Endothelial cell of umbilical vein (primary cell): ENCODE measurements at regions of chr19 and their contacts with region 1.

Region 1: DNA sequence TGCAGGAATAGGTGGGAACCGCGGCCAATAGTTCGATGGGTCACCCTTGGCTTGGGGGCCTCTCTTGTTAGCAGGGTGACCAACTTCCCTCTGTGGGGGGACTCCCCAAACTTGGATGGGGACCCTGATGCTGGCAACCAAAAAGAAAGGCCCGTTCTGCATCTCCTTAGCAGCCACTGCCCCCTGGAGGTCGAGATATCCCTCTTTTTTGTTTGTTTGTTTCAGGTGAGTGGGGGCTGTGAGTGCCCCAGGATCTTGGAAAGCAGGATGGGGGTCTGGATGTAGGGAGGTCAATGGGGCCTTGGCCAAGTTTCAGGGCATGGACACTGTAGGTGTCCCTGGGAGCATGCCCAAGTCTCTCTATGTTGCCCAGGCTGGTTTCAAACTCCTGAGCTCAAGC is 7.7 kb upstream of the CRTC1 start:
- DNase-seq: no peak
- H3K4me3 ChIP-seq: no peak overlapping the region
- H3K27ac ChIP-seq: no peak overlapping the region
- H3K4me1 ChIP-seq: peaks cover 17% of the 10 kb centered on the region
- H3K27me3 ChIP-seq: no peaks in the 10 kb centered on the region
- CTCF ChIP-seq: peak; percentile 33 to 38
- POLR2A ChIP-seq: no peak

Region 2: DNA sequence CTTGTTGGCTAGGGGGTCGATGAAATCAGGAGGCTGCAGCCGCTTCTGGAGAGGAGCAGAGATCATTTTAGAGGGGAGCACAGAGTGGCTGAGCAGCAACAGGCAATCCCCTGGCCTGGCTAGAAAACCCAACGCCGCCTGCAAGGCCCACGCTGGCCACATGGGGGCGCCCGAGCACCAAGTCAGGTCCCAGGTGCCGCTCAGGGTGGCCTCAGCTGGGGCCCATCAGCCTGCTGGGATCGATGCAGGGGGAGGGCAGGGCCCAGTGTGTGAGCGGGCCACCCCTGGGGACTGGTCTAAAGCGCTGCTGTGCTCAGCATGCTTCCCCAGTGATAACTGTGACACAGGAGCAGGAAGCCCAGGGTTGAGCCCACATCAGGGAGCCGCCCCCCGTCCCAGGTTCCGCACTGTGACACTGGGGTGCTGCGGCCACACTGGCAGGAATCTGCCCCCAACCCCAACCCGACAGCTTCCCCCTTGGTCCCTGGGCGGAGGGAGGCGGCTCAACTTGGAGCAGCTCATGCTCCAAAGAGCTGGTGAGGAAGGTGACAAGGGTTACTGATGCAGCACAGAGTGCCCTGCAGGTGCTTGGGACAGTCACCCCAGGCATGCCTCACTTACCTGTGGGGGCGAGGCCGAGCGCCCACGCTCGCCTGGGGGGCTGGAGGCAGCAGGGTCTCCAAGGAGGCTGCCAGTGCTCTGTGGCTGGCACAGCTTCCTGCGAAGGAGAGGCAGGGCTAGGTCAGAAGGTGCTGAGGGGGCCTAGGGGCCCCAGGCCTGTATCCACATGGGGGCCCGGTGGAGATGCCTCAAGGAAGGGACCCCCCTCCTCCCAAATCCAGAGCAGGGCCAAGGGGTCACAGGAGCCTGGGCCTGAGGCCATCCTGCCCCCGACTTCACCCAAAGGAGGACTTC is 224.6 kb before region 1 on chr19:
- CTCF ChIA-PET with region 1: interaction called, 3 read pairs
- POLR2A ChIA-PET with region 1: no interaction called
- dilution Hi-C with region 1: no loop called
- intact Hi-C with region 1: loop called (anchors 5 kb)
- DNase-seq: peak; percentile 65
- H3K4me3 ChIP-seq: no peak overlapping the region
- H3K27ac ChIP-seq: no peak overlapping the region
- H3K4me1 ChIP-seq: no peaks in the 10 kb centered on the region
- H3K27me3 ChIP-seq: no peaks in the 10 kb centered on the region
- CTCF ChIP-seq: peak; percentile 97 to 99
- POLR2A ChIP-seq: no peak

Region 3: GRCh38 chr19:18594096-18594823 is 81.5 kb before region 1 on chr19:
- CTCF ChIA-PET with region 1: interaction called, 21 read pairs
- POLR2A ChIA-PET with region 1: no interaction called
- dilution Hi-C with region 1: no loop called
- intact Hi-C with region 1: loop called (anchors 1 kb)
- DNase-seq: peak; percentile 80
- H3K4me3 ChIP-seq: peak overlapping the region in 2 of 3 experiments; percentile 14 to 25
- H3K27ac ChIP-seq: no peak overlapping the region
- H3K4me1 ChIP-seq: peaks cover 12% of the 10 kb centered on the region
- H3K27me3 ChIP-seq: no peaks in the 10 kb centered on the region
- CTCF ChIP-seq: peak; percentile 71 to 90
- POLR2A ChIP-seq: no peak

Region 4: DNA sequence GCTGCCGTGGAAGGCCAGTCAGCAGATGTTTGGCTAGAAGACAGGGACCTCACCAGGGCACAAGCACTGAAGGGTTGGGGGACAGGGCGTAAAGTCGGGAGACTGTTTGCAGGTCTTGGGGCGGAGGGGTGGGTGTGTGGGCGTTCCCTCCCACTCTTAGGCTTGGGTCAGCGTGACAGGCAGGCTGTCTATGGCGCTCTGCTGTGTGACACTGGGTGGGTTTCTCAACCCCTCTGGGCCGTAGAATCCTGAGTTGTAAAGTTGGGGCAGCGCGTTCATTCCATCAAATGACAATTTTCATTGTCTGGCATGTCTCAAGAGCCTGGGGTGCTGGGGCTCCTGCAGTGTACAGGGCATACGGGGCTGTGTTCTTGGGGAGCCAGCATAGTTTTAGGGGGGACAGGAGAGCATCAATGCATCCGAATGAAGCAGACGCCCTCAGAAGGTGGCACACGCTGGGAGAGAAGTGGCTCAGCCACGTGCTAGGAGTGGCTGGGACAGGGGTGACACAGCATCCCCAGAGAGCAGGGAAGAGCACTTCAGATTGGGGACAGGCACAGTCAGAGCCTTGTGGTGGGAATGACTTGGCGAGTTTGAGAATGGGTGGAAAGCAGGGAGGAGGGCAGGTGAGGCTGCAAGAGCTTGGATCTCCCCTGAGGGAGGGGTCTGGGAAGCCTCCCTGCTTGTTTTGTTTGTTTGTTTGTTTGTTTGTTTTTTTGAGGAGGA is 12.1 kb after region 1 on chr19:
- CTCF ChIA-PET with region 1: no interaction called
- POLR2A ChIA-PET with region 1: no interaction called
- dilution Hi-C with region 1: no loop called
- intact Hi-C with region 1: no loop called
- DNase-seq: no peak
- H3K4me3 ChIP-seq: no peak overlapping the region
- H3K27ac ChIP-seq: no peak overlapping the region
- H3K4me1 ChIP-seq: peaks cover 7% of the 10 kb centered on the region
- H3K27me3 ChIP-seq: no peaks in the 10 kb centered on the region
- CTCF ChIP-seq: no peak
- POLR2A ChIP-seq: no peak

Region 5: GRCh38 chr19:18710996-18711751 is 35.4 kb after region 1 on chr19:
- CTCF ChIA-PET with region 1: no interaction called
- POLR2A ChIA-PET with region 1: no interaction called
- dilution Hi-C with region 1: no loop called
- intact Hi-C with region 1: no loop called
- DNase-seq: no peak
- H3K4me3 ChIP-seq: no peak overlapping the region
- H3K27ac ChIP-seq: no peak overlapping the region
- H3K4me1 ChIP-seq: peaks cover 2% of the 10 kb centered on the region
- H3K27me3 ChIP-seq: no peaks in the 10 kb centered on the region
- CTCF ChIP-seq: no peak
- POLR2A ChIP-seq: no peak